MCF 10A (cell line): ENCODE measurements at regions of chr11 and their contacts with region 1.

Region 1: GRCh38 chr11:62787005-62787759 is at the start of gene TMEM179B:
- DNase-seq: peak; percentile 98
- H3K4me3 Mint-ChIP-seq: peak within 1 kb of the TSS; percentile 90
- H3K27ac Mint-ChIP-seq: peak within 1 kb of the TSS; percentile 93
- H3K4me1 Mint-ChIP-seq: peaks cover 15% of the 10 kb centered on the region
- H3K27me3 Mint-ChIP-seq: no peaks in the 10 kb centered on the region
- CTCF ChIP-seq: peak; percentile 40
- total RNA-seq, gene TMEM179B: 45.1 and 47.8 TPM in 2 replicates

Region 2: GRCh38 chr11:62732801-62733200 is 54.4 kb before region 1 on chr11:
- CTCF ChIA-PET with region 1: interaction called, 9 read pairs
- POLR2A ChIA-PET with region 1: interaction called, 51 read pairs
- intact Hi-C with region 1: loop called (anchors 1 kb)
- DNase-seq: peak; percentile 57
- H3K4me3 Mint-ChIP-seq: no peak overlapping the region
- H3K27ac Mint-ChIP-seq: no peak overlapping the region
- H3K4me1 Mint-ChIP-seq: no peaks in the 10 kb centered on the region
- H3K27me3 Mint-ChIP-seq: no peaks in the 10 kb centered on the region
- CTCF ChIP-seq: peak; percentile 42

Region 3: DNA sequence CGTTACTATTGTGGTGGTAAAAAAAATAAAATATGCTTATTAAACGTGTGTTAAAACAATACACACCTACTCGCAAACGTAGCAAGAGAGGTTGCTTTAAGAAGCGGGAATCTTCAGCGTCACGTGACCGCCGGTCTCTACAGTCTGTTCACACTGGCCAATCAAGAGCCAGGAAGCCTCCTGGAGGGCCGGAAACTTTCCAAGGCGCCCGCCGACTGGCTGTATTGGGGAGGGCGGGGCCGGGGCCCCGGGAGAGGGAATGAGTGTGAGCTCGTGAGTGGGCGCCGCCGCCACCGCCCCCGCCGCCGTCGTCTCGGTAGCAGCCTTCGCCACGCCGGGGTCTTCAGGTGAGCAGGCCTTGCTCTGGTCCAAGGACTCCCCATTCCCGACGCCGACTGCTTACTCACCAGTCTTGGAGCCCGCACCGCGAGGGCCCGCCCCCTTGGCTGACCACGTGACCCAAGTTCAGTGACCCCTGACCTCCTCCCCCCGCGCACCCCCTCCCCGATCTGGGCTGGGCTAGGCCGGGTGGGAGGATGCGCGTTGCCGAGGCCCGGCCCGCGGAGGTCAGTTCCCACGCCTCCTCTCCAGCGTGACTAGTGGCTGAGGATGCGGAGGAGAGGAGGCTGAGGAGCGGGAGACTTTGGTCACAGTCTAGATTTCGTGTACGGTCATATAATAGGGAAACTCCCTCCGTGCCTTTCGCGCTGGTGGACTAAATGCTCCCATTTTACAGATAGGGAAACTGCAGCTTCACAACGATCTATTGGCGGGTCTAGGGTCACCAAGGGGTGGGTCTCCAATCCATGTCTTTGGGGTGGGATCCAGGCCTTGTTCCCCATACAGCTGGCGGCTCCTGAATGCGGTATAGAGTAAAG is 15.8 kb before region 1 on chr11 and contains the start of gene TAF6L:
- CTCF ChIA-PET with region 1: interaction called, 47 read pairs
- POLR2A ChIA-PET with region 1: interaction called, 84 read pairs
- intact Hi-C with region 1: loop called (anchors 1 kb)
- DNase-seq: peak; percentile 98
- H3K4me3 Mint-ChIP-seq: peak within 1 kb of the TSS; percentile 98
- H3K27ac Mint-ChIP-seq: peak within 1 kb of the TSS; percentile 95
- H3K4me1 Mint-ChIP-seq: peaks cover 5% of the 10 kb centered on the region
- H3K27me3 Mint-ChIP-seq: no peaks in the 10 kb centered on the region
- CTCF ChIP-seq: no peak
- total RNA-seq, gene TAF6L: 11.6 and 12.0 TPM in 2 replicates

Region 4: GRCh38 chr11:62805076-62805892 is 18.1 kb after region 1 on chr11 and contains the start of gene NXF1:
- CTCF ChIA-PET with region 1: interaction called, 11 read pairs
- POLR2A ChIA-PET with region 1: interaction called, 163 read pairs
- intact Hi-C with region 1: no loop called
- DNase-seq: peak; percentile 93
- H3K4me3 Mint-ChIP-seq: peak within 1 kb of the TSS; percentile 95
- H3K27ac Mint-ChIP-seq: peak within 1 kb of the TSS; percentile 99
- H3K4me1 Mint-ChIP-seq: peaks cover 20% of the 10 kb centered on the region
- H3K27me3 Mint-ChIP-seq: no peaks in the 10 kb centered on the region
- CTCF ChIP-seq: no peak
- total RNA-seq, gene NXF1: 47.6 and 53.3 TPM in 2 replicates

Region 5: DNA sequence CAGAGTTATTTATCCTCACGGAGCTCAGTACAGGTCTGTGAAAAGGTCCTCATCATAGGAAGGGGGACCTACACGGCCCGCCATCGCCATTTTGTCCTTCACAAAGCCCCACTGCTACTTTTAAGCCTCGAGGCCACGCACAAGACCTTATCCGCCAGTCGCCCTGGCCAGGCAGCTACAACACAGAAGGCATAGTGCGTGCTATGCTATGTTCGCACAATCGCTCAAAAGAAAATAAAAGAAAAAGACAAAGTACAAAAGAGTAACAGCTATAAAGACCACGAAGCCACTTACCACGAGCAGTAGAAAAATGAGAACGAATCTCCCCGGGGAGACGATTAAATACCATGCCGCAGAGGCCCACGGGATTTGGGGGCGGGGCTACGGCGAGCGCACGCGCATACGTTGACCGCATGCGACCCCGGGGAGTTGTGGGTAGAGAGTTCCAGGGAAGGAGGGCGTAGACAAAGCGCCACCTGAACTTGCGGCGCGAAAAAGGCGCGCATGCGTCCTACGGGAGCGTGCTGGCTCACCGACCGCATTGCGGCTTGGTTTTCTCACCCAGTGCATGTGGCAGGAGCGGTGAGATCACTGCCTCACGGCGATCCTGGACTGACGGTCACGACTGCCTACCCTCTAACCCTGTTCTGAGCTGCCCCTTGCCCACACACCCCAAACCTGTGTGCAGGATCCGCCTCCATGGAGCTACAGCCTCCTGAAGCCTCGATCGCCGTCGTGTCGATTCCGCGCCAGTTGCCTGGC is 68.6 kb after region 1 on chr11:
- CTCF ChIA-PET with region 1: interaction called, 47 read pairs
- POLR2A ChIA-PET with region 1: interaction called, 148 read pairs
- intact Hi-C with region 1: no loop called
- DNase-seq: peak; percentile 98
- H3K4me3 Mint-ChIP-seq: peak overlapping the region; percentile 94
- H3K27ac Mint-ChIP-seq: peak overlapping the region; percentile 64
- H3K4me1 Mint-ChIP-seq: peaks cover 35% of the 10 kb centered on the region
- H3K27me3 Mint-ChIP-seq: no peaks in the 10 kb centered on the region
- CTCF ChIP-seq: no peak

Region 6: GRCh38 chr11:62880803-62881578 is 93.8 kb after region 1 on chr11 and contains the start of gene SLC3A2:
- CTCF ChIA-PET with region 1: interaction called, 6 read pairs
- POLR2A ChIA-PET with region 1: interaction called, 41 read pairs
- intact Hi-C with region 1: loop called (anchors 5 kb)
- DNase-seq: peak; percentile 91
- H3K4me3 Mint-ChIP-seq: peak within 1 kb of the TSS; percentile 100
- H3K27ac Mint-ChIP-seq: peak within 1 kb of the TSS; percentile 99
- H3K4me1 Mint-ChIP-seq: peaks cover 47% of the 10 kb centered on the region
- H3K27me3 Mint-ChIP-seq: no peaks in the 10 kb centered on the region
- CTCF ChIP-seq: peak; percentile 70
- total RNA-seq, gene SLC3A2: 838 and 896 TPM in 2 replicates